Activated B cell treated with CpG ODN at 0.5 μM for 24 hours (primary cell): ENCODE measurements at regions of chr11 and their contacts with region 1.

Region 1: DNA sequence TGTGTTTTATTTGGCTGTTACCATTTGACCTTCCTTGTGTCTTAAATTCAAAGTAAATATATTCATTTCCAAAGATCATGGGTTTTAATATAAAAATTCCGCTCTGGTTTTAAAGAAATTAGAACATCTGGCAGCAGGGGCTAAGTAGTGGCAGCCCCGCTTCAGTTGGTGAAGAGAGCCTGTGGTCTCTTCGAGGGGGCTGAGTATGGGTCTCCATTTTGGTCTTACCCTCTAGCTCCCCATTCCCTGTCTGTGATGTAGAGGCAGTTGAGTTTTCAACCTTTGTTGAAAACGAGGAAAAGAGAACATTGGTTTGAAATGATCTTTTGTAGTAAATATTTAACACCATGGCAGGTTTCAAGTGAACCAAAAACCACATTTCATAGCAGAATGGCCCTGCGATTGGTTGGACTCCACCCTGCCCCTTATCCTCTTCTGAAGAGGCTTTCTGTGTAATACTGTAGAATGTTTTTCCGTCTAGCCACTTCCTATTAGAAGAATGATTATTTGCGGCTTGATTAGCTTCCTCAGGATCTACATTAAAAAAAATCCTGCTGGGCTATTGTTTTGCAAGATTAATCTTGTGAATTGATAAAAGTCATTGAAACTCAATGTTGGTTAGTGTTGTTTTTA is 17.7 kb downstream of the APLP2 start:
- DNase-seq: no peak
- ATAC-seq: no peak
- H3K4me3 Mint-ChIP-seq: no peak overlapping the region
- H3K27ac Mint-ChIP-seq: no peak overlapping the region
- H3K4me1 Mint-ChIP-seq: peaks cover 42% of the 10 kb centered on the region
- H3K27me3 Mint-ChIP-seq: no peaks in the 10 kb centered on the region
- CTCF ChIP-seq: no peak

Region 2: DNA sequence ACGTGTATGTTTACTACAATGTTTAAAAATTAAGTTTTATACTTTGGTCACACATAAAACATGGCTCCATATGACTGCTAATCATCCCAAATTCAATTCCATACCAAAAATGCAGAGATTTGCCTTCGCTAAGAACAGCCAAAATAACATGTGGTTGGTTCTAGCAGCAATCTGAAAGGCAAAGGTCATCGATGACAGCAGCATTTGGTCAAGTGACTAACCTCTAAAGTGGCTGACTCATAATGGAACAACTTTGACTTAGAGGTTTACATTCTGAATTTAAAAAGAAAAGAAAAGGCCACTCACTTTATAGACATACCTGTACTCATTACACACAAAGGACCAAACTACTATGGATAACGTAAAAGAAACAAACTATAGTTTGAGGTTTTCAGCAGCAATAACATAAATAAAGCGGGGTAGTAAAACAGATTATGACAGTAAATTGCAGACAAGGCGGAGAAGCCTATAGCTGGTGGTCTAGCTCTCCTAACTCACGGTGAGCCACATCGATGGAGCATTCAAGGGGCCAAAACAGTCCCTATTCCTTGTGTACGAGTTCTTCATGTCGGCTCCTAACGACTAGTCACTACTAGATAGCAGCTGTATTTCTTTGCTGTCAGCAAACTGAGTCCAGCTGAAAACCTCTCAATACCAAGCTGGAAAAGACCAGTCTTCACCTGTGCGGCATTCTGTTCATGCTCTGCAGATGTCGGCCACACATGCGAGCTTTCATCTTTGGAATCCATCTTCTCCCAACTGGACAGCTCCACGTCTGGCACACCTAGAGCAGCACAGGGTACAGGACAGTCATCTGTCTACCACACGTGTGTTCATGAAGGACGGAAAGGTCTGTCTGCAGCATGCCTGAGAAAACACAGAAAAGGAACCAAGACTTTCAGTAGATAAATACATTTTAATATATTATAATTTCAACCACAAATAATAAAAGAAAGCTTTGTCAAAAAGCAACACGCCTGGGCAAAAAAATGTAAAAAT is 126.9 kb before region 1 on chr11:
- CTCF ChIA-PET with region 1: no interaction called
- POLR2A ChIA-PET with region 1: no interaction called
- intact Hi-C with region 1: no loop called
- DNase-seq: no peak
- ATAC-seq: peak; percentile 60
- H3K4me3 Mint-ChIP-seq: peak overlapping the region; percentile 39
- H3K27ac Mint-ChIP-seq: peak overlapping the region; percentile 47
- H3K4me1 Mint-ChIP-seq: peaks cover 16% of the 10 kb centered on the region
- H3K27me3 Mint-ChIP-seq: no peaks in the 10 kb centered on the region
- CTCF ChIP-seq: no peak

Region 3: DNA sequence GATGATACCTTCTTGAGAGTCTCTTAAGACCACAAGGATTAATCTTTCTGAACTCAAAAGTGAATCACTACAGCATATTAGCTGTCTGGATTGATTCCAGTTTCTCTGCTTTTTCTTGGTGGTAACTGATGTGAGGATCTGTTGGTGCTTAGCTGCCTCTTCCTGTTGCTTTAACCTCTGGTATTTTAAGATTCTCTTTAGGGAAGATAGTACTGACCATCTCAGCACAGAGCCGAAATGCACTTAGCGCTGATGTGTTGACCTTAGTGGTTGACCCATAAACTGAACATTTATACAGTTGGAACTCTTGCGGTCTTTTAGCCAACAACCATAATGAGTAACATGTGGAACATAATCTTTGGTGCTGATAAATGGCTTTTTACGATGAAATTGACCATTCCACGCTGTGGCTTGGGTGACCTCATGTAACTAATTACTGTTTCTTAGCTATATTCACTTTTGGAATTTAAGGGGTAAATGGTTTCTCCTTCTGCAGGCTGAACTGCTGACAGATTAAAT is 15.9 kb after region 1 on chr11:
- CTCF ChIA-PET with region 1: no interaction called
- POLR2A ChIA-PET with region 1: no interaction called
- intact Hi-C with region 1: loop called (anchors 2 kb)
- DNase-seq: no peak
- ATAC-seq: no peak
- H3K4me3 Mint-ChIP-seq: no peak overlapping the region
- H3K27ac Mint-ChIP-seq: no peak overlapping the region
- H3K4me1 Mint-ChIP-seq: peaks cover 31% of the 10 kb centered on the region
- H3K27me3 Mint-ChIP-seq: no peaks in the 10 kb centered on the region
- CTCF ChIP-seq: no peak